ENCODE measurements at regions of chr9 and their contacts with region 1.

Region 1: DNA sequence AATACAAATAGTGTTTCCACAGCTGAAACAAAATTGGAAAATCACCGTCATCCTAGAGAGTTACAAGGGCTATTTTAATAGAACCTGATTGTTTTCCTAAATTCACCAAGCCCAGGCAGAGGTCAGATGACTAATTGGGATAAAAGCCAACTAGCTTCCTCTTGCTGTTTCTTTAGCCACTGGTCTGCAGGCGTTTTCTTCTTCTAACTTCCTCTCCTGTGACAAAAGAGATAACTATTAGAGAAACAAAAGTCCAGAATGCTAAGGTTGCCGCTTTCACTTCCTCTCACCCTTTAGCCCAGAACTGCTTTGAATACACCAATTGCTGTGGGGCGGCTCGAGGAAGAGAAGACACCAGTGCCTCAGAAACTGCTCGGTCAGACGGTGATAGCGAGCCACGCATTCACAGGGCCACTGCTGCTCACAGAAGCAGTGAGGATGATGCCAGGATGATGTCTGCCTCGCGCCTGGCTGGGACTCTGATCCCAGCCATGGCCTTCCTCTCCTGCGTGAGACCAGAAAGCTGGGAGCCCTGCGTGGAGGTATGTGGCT is at the start of gene TLR4:
- DNase-seq: peak; percentile 99
- H3K4me3 ChIP-seq: peak within 1 kb of the TSS; percentile 52 to 99 (median 63)
- H3K27ac ChIP-seq: peak within 1 kb of the TSS; percentile 81
- H3K4me1 ChIP-seq: peaks cover 35% of the 10 kb centered on the region
- H3K27me3 ChIP-seq: no peaks in the 10 kb centered on the region
- CTCF ChIP-seq: no peak
- POLR2A ChIP-seq: peak; percentile 77
- total RNA-seq, gene TLR4: 38.6 and 41.7 TPM in 2 replicates

Region 2: GRCh38 chr9:117574099-117574498 is 130.0 kb before region 1 on chr9:
- CTCF ChIA-PET with region 1: no interaction called
- POLR2A ChIA-PET with region 1: no interaction called
- dilution Hi-C with region 1: no loop called
- intact Hi-C with region 1: no loop called
- DNase-seq: no peak
- H3K4me3 ChIP-seq: no peak overlapping the region
- H3K27ac ChIP-seq: no peak overlapping the region
- H3K4me1 ChIP-seq: no peaks in the 10 kb centered on the region
- H3K27me3 ChIP-seq: no peaks in the 10 kb centered on the region
- CTCF ChIP-seq: no peak
- POLR2A ChIP-seq: no peak

Region 3: GRCh38 chr9:117678871-117679270 is 25.2 kb before region 1 on chr9:
- CTCF ChIA-PET with region 1: interaction called, 27 read pairs
- POLR2A ChIA-PET with region 1: interaction called, 10 read pairs
- dilution Hi-C with region 1: no loop called
- intact Hi-C with region 1: loop called (anchors 1 kb)
- DNase-seq: peak; percentile 82
- H3K4me3 ChIP-seq: peak overlapping the region in 2 of 3 experiments; percentile 43 to 68
- H3K27ac ChIP-seq: peak overlapping the region; percentile 85
- H3K4me1 ChIP-seq: peaks cover 45% of the 10 kb centered on the region
- H3K27me3 ChIP-seq: no peaks in the 10 kb centered on the region
- CTCF ChIP-seq: no peak
- POLR2A ChIP-seq: no peak

Region 4: DNA sequence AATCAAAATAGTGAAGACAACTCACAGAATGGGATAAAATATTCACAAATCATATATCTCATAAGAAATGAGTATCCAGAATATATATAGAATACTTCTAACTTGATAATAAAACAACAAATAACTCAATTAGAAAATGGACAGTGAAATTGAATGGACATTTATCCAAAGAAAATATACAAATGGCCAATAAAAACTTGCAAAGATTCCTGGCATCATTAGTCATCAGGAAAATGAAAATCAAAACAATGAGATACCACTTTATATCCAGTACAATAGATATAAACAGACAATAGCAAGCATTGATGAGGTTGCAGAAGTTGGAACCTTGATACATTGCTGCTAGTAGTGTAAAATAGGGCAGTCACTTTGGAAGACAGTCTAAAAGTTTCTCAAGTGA is 12.7 kb before region 1 on chr9:
- CTCF ChIA-PET with region 1: interaction called, 3 read pairs
- POLR2A ChIA-PET with region 1: no interaction called
- dilution Hi-C with region 1: no loop called
- intact Hi-C with region 1: loop called (anchors 1 kb)
- DNase-seq: peak; percentile 75
- H3K4me3 ChIP-seq: no peak overlapping the region
- H3K27ac ChIP-seq: peak overlapping the region; percentile 12
- H3K4me1 ChIP-seq: peaks cover 14% of the 10 kb centered on the region
- H3K27me3 ChIP-seq: no peaks in the 10 kb centered on the region
- CTCF ChIP-seq: no peak
- POLR2A ChIP-seq: no peak

Region 5: DNA sequence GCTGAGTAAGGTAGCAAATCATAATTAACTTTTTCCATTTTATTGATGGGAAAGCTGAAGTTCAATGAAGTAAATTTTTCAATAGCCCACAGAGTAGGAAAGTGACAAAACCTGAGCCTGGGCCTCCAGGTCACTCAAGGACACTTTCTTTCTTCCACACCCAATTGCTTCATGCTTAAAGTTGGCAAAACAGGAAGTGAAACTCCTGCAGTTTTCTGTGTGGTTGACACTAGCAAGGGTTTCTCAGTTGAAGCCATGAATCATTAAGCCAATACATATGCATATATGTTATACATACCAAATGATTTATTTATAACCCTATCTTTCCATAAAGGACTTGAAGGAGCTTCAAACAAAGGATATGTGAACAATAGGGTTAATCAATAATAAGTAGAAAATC is 14.0 kb after region 1 on chr9:
- CTCF ChIA-PET with region 1: no interaction called
- POLR2A ChIA-PET with region 1: no interaction called
- dilution Hi-C with region 1: no loop called
- intact Hi-C with region 1: loop called (anchors 1 kb)
- DNase-seq: peak; percentile 54
- H3K4me3 ChIP-seq: no peak overlapping the region
- H3K27ac ChIP-seq: no peak overlapping the region
- H3K4me1 ChIP-seq: peaks cover 28% of the 10 kb centered on the region
- H3K27me3 ChIP-seq: no peaks in the 10 kb centered on the region
- CTCF ChIP-seq: no peak
- POLR2A ChIP-seq: no peak

Region 6: DNA sequence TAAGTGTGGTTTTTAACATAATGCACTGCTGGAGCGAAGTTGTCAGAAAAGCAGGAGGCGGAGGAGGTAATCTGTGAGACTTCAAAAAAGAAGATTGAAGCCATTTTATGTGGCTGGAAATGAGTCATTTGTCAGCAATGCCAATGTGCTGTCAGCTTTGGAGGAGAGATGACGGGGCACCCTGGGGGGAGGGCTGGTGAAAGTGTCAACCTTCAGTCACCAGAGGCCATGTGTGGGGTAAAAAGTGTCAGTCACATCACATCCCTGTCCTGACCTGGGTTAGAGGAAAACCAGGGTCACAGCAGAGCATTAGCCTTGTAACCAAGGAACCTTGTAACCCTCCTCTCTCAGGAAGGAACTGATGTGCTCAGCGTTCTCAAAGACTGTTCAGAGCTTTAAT is 59.2 kb after region 1 on chr9:
- CTCF ChIA-PET with region 1: interaction called, 3 read pairs
- POLR2A ChIA-PET with region 1: interaction called, 4 read pairs
- dilution Hi-C with region 1: no loop called
- intact Hi-C with region 1: loop called (anchors 1 kb)
- DNase-seq: peak; percentile 60
- H3K4me3 ChIP-seq: no peak overlapping the region
- H3K27ac ChIP-seq: peak overlapping the region; percentile 16
- H3K4me1 ChIP-seq: peaks cover 14% of the 10 kb centered on the region
- H3K27me3 ChIP-seq: no peaks in the 10 kb centered on the region
- CTCF ChIP-seq: no peak
- POLR2A ChIP-seq: no peak

Region 7: GRCh38 chr9:117782931-117783788 is 79.1 kb after region 1 on chr9:
- CTCF ChIA-PET with region 1: no interaction called
- POLR2A ChIA-PET with region 1: interaction called, 3 read pairs
- dilution Hi-C with region 1: no loop called
- intact Hi-C with region 1: loop called (anchors 2 kb)
- DNase-seq: peak; percentile 83
- H3K4me3 ChIP-seq: peak overlapping the region; percentile 39 to 77 (median 52)
- H3K27ac ChIP-seq: no peak overlapping the region
- H3K4me1 ChIP-seq: peaks cover 7% of the 10 kb centered on the region
- H3K27me3 ChIP-seq: no peaks in the 10 kb centered on the region
- CTCF ChIP-seq: peak; percentile 80
- POLR2A ChIP-seq: no peak

Region 8: GRCh38 chr9:118529210-118529609 is 825.1 kb after region 1 on chr9:
- CTCF ChIA-PET with region 1: no interaction called
- POLR2A ChIA-PET with region 1: no interaction called
- dilution Hi-C with region 1: no loop called
- intact Hi-C with region 1: loop called (anchors 5 kb)
- DNase-seq: peak; percentile 98
- H3K4me3 ChIP-seq: no peak overlapping the region
- H3K27ac ChIP-seq: peak overlapping the region; percentile 95
- H3K4me1 ChIP-seq: peaks cover 40% of the 10 kb centered on the region
- H3K27me3 ChIP-seq: no peaks in the 10 kb centered on the region
- CTCF ChIP-seq: no peak
- POLR2A ChIP-seq: no peak

Region 9: DNA sequence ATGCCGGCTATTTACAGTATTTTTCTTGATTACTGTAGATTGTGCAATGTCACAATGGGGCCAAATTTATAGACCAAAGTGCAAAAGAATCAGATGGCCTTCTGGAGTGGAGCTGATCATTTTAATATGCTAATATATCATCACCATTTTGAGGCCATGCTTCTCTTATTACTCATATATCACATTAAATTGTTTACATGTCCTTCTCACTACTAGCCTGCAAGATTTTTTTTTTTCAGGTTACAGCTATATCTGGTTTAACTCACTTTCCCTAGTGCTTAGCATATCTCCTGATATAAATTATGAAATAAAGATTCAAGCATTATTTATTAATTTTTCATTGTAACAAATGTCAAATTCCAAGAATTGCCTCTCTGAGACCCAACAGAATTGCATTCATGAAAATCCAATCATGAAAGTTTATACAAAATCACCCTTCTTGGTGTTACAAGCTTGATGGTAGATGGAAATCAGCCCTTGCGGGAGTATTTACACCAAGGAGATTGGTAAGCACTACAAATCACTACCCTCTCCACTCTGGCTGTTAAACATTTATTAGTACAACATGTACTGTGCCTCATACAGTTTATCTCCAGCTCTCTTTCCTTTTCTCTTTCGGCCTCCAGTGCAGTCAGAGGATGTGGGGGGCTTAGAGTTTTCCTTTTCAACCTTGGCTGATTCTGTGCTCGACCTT is 961.3 kb after region 1 on chr9:
- CTCF ChIA-PET with region 1: no interaction called
- POLR2A ChIA-PET with region 1: no interaction called
- dilution Hi-C with region 1: no loop called
- intact Hi-C with region 1: no loop called
- DNase-seq: no peak
- H3K4me3 ChIP-seq: no peak overlapping the region
- H3K27ac ChIP-seq: no peak overlapping the region
- H3K4me1 ChIP-seq: no peaks in the 10 kb centered on the region
- H3K27me3 ChIP-seq: no peaks in the 10 kb centered on the region
- CTCF ChIP-seq: no peak
- POLR2A ChIP-seq: no peak